Mammary epithelial cell (primary cell): ENCODE measurements at regions of chr4 and their contacts with region 1.

Region 1: GRCh38 chr4:71553605-71554004 is 214.8 kb downstream of the SLC4A4 start:
- DNase-seq: peak; percentile 12
- H3K4me3 ChIP-seq: no peak overlapping the region
- H3K27ac ChIP-seq: no peak overlapping the region
- H3K4me1 ChIP-seq: no peaks in the 10 kb centered on the region
- H3K27me3 ChIP-seq: no peaks in the 10 kb centered on the region
- CTCF ChIP-seq: peak; percentile 39 to 61

Region 2: DNA sequence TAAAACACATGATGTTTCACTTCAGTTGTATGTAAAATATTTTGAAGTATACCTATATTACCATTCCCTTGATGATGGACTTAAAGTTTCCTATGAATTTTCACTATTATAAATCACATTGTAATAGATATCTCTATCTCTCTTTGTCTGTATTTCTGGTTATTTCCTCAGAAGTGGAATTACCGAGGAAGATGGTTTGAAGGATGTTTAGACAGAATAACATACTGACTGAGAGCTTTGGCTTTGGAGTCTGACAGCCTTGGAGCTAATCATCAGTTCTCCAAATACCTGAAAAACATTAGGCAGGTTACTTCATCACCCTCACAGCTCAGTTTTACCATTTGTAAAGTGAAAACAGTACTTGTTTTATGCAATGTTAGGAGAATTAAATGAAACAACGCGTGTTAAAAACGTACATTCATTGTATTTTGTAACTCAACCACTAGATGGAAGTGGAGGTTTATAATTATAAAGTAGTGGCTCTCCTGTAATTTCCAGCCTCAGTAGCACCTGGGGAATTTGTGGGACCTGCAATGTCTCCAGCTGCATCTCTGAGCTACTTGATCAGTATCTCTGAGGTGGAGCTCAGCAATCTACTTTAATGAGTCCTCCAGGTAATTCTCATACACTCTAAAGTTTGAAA is 901.6 kb before region 1 on chr4:
- CTCF ChIA-PET with region 1: no interaction called
- dilution Hi-C with region 1: no loop called
- in situ Hi-C with region 1: no loop called
- intact Hi-C with region 1: loop called (anchors 5 kb)
- DNase-seq: peak; percentile 29
- H3K4me3 ChIP-seq: no peak overlapping the region
- H3K27ac ChIP-seq: no peak overlapping the region
- H3K4me1 ChIP-seq: no peaks in the 10 kb centered on the region
- H3K27me3 ChIP-seq: no peaks in the 10 kb centered on the region
- CTCF ChIP-seq: peak; percentile 51 to 56

Region 3: DNA sequence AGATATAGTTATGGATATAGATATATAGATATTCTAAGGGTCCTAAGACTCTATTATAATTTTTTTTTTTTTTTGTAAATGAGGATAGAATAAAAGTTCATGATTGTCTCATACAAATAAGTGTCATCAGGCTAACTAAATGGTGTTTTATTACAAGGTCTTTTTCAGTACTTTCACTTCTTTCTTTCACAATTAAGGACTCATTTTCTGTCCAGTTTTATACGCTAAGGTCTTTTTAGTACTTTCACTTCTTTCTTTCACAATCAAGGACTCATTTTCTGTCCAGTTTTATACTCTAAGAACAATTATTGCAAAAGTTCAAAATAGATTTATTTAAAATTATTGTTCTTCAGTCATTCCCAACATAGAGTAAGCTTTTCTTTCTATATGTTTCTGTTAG is 799.1 kb before region 1 on chr4:
- CTCF ChIA-PET with region 1: no interaction called
- dilution Hi-C with region 1: no loop called
- in situ Hi-C with region 1: no loop called
- intact Hi-C with region 1: no loop called
- DNase-seq: no peak
- H3K4me3 ChIP-seq: no peak overlapping the region
- H3K27ac ChIP-seq: no peak overlapping the region
- H3K4me1 ChIP-seq: no peaks in the 10 kb centered on the region
- H3K27me3 ChIP-seq: no peaks in the 10 kb centered on the region
- CTCF ChIP-seq: no peak

Region 4: GRCh38 chr4:71184195-71184781 is 369.3 kb before region 1 on chr4:
- CTCF ChIA-PET with region 1: interaction called, 4 read pairs
- dilution Hi-C with region 1: no loop called
- in situ Hi-C with region 1: no loop called
- intact Hi-C with region 1: loop called (anchors 2 kb)
- DNase-seq: peak; percentile 31
- H3K4me3 ChIP-seq: no peak overlapping the region
- H3K27ac ChIP-seq: no peak overlapping the region
- H3K4me1 ChIP-seq: peaks cover 15% of the 10 kb centered on the region
- H3K27me3 ChIP-seq: peaks cover 31% of the 10 kb centered on the region
- CTCF ChIP-seq: peak; percentile 62 to 71

Region 5: DNA sequence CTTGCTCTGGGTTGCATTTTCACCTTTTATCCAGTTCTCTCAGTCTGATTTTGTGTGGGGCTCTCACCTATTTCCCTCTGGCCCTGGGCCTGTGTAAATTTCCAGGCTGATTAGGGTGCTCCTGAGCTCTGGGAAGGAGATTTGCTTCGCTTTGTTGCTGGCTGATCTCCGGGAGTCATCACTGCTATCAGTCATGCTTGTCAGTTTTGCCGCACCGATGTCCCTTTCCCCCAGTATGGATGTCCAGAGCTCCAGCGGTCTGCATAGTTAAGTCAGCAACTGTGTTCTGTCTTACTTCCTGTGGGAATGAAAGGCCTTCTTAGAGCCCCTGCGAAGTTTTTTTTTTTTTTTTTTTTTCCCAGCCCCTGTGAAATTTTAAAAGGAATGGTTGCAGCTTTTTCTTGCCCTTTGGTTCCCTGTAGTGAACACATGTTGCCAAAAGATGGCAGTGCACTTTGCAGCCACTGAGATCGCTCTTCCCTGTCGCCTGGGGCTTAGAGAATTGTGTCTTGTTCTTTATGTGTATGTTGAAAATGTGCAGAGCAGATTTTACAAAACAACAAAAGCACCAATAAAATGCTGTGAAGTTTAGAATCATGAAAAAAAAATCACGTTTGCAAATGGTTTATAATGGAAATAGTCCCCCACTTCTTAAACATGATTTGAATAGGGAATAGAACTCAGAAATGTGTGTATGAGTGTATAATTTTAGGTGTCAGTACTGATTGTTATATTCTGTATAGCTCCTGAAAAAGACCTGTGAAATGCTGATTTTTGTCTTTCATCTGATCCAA is 323.9 kb before region 1 on chr4:
- CTCF ChIA-PET with region 1: no interaction called
- dilution Hi-C with region 1: no loop called
- in situ Hi-C with region 1: no loop called
- intact Hi-C with region 1: loop called (anchors 1 kb)
- DNase-seq: no peak
- H3K4me3 ChIP-seq: no peak overlapping the region
- H3K27ac ChIP-seq: no peak overlapping the region
- H3K4me1 ChIP-seq: no peaks in the 10 kb centered on the region
- H3K27me3 ChIP-seq: no peaks in the 10 kb centered on the region
- CTCF ChIP-seq: peak; percentile 60 to 80